ENCODE measurements at regions of chr14 and their contacts with region 1.

Region 1: DNA sequence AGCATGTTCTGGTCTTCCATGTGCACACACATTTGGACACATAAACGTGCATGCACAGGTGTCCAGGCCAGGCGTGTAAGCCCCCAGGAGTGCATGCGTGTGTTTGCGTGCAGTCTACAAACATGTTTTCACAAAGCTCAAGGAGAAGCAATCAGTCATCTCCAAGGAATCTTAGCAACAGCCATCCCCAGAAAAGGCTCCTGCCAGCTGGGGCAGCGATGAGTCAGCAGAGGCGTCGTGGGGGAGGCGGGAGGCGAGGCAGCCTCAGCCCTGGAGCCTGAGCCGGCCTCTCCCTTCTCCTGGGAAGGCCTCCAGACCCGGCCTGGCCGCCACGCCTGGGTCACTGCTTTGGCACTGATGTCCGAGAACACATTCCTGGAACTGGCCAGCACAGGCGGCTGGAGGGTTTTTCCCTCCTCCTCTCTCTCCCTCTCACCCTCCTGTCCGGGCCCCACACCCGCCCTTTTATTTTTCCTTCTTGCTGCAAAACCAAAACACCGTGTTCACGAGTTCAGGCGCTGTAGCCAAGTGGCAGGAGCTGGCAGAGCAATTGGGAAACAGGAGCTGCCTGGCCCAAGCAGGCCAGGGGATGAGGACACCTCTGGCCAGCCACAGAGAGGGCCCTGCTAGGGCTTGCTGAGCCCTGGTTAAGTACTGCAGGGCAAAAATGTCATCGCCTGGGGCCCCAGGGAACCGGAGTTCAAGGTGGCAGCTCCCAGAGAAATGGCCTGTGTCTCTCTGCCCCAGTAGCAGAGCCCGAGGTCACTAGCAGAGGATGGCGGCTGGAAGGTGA is 92.7 kb downstream of the LRRC74A start:
- DNase-seq: no peak
- ATAC-seq: no peak
- H3K4me3 ChIP-seq: no peak overlapping the region
- H3K4me3 Mint-ChIP-seq: peak overlapping the region in 6 of 10 donors; percentile 27 to 67 (median 56)
- H3K27ac ChIP-seq: no peak overlapping the region
- H3K27ac Mint-ChIP-seq: peak overlapping the region in 2 of 9 donors; percentile 25 to 40
- H3K4me1 ChIP-seq: peaks cover 0 to 27% of the 10 kb centered on the region in 2 donors
- H3K4me1 Mint-ChIP-seq: peaks cover 12 to 65% (median 55%) of the 10 kb centered on the region in 7 donors
- H3K27me3 ChIP-seq: no peaks in the 10 kb centered on the region
- H3K27me3 Mint-ChIP-seq: peaks cover 0 to 1% (median 0%) of the 10 kb centered on the region in 5 donors

Region 2: GRCh38 chr14:76941946-76942805 is 23.2 kb after region 1 on chr14:
- CTCF ChIA-PET with region 1: interaction called, 15 read pairs
- POLR2A ChIA-PET with region 1: interaction called, 6 read pairs
- intact Hi-C with region 1: no loop called
- DNase-seq: no peak
- ATAC-seq: no peak
- H3K4me3 ChIP-seq: no peak overlapping the region
- H3K4me3 Mint-ChIP-seq: peak overlapping the region in 1 of 10 donors; percentile 41
- H3K27ac ChIP-seq: no peak overlapping the region
- H3K27ac Mint-ChIP-seq: peak overlapping the region in 3 of 9 donors; percentile 38 to 70 (median 70)
- H3K4me1 ChIP-seq: peaks cover 3 to 16% of the 10 kb centered on the region in 2 donors
- H3K4me1 Mint-ChIP-seq: peaks cover 7 to 23% (median 18%) of the 10 kb centered on the region in 7 donors
- H3K27me3 ChIP-seq: no peaks in the 10 kb centered on the region
- H3K27me3 Mint-ChIP-seq: no peaks in the 10 kb centered on the region

Region 3: DNA sequence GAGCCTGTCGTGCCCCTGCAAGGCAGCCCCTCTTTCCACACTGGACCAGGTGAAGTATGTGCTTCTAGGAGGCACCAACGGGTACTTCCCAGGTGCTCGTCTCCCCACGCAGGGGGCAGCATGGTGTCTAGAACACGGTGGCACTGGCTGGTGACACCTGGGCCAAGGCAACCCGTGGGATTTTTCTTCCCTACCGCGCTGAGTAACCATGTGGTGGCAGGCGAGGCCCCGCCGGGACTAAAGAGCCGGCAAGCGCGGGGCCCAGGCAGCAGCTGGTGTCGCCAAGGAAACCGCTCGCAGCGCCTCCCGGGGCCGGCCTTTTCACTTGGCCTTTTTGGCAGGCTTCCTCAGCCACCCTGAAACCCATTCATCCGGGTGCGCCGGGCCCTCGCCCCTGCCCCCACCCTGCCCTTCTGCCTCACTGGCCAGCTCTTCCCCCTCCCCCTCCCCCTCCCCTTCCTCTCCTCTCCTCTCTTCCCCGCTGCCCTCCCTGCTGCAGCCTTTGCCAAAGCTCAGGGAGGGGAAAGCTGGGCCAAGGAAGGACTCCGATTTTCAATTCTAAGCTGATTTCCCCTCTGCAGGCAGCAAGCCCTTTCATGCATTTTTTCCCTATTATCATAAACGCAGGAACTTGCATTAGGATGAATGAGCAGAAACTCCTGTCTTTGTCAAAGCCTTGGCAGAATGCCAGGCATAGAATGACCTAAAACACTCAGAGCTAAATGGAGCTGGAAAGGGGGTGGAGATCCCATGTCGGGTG is 28.3 kb after region 1 on chr14:
- CTCF ChIA-PET with region 1: interaction called, 15 read pairs
- POLR2A ChIA-PET with region 1: interaction called, 6 read pairs
- intact Hi-C with region 1: no loop called
- DNase-seq: peak; percentile 53 to 76 (median 68)
- ATAC-seq: peak; percentile 96
- H3K4me3 ChIP-seq: no peak overlapping the region
- H3K4me3 Mint-ChIP-seq: peak overlapping the region in 9 of 10 donors; percentile 20 to 65 (median 50)
- H3K27ac ChIP-seq: peak overlapping the region; percentile 20
- H3K27ac Mint-ChIP-seq: peak overlapping the region in 7 of 9 donors; percentile 28 to 83 (median 63)
- H3K4me1 ChIP-seq: peaks cover 6 to 16% of the 10 kb centered on the region in 2 donors
- H3K4me1 Mint-ChIP-seq: peaks cover 20 to 56% (median 35%) of the 10 kb centered on the region in 7 donors
- H3K27me3 ChIP-seq: no peaks in the 10 kb centered on the region
- H3K27me3 Mint-ChIP-seq: no peaks in the 10 kb centered on the region

Region 4: GRCh38 chr14:76956316-76957090 is 37.6 kb after region 1 on chr14:
- CTCF ChIA-PET with region 1: interaction called, 20 read pairs
- POLR2A ChIA-PET with region 1: interaction called, 12 read pairs
- intact Hi-C with region 1: no loop called
- DNase-seq: peak; percentile 70 to 90 (median 78)
- ATAC-seq: peak; percentile 82
- H3K4me3 ChIP-seq: peak overlapping the region; percentile 74
- H3K4me3 Mint-ChIP-seq: peak overlapping the region; percentile 82 to 97 (median 93)
- H3K27ac ChIP-seq: peak overlapping the region; percentile 87
- H3K27ac Mint-ChIP-seq: peak overlapping the region; percentile 88 to 99 (median 98)
- H3K4me1 ChIP-seq: peaks cover 38 to 49% of the 10 kb centered on the region in 2 donors
- H3K4me1 Mint-ChIP-seq: peaks cover 24 to 77% (median 71%) of the 10 kb centered on the region in 7 donors
- H3K27me3 ChIP-seq: no peaks in the 10 kb centered on the region
- H3K27me3 Mint-ChIP-seq: no peaks in the 10 kb centered on the region

Region 5: GRCh38 chr14:77040059-77040740 is 121.3 kb after region 1 on chr14:
- CTCF ChIA-PET with region 1: interaction called, 11 read pairs
- POLR2A ChIA-PET with region 1: interaction called, 3 read pairs
- intact Hi-C with region 1: no loop called
- DNase-seq: peak; percentile 86 to 99 (median 99)
- ATAC-seq: peak; percentile 87
- H3K4me3 ChIP-seq: peak overlapping the region; percentile 78
- H3K4me3 Mint-ChIP-seq: peak overlapping the region; percentile 76 to 97 (median 87)
- H3K27ac ChIP-seq: peak overlapping the region; percentile 97
- H3K27ac Mint-ChIP-seq: peak overlapping the region; percentile 97 to 100 (median 99)
- H3K4me1 ChIP-seq: peaks cover 57 to 77% of the 10 kb centered on the region in 2 donors
- H3K4me1 Mint-ChIP-seq: peaks cover 50 to 97% (median 89%) of the 10 kb centered on the region in 7 donors
- H3K27me3 ChIP-seq: no peaks in the 10 kb centered on the region
- H3K27me3 Mint-ChIP-seq: no peaks in the 10 kb centered on the region

Measured in naive thymus-derived CD4-positive, alpha-beta T cell (primary cell).